Dorsolateral prefrontal cortex (tissue), 120 donors: ENCODE measurements at regions of chr1 and their contacts with region 1.

Region 1: DNA sequence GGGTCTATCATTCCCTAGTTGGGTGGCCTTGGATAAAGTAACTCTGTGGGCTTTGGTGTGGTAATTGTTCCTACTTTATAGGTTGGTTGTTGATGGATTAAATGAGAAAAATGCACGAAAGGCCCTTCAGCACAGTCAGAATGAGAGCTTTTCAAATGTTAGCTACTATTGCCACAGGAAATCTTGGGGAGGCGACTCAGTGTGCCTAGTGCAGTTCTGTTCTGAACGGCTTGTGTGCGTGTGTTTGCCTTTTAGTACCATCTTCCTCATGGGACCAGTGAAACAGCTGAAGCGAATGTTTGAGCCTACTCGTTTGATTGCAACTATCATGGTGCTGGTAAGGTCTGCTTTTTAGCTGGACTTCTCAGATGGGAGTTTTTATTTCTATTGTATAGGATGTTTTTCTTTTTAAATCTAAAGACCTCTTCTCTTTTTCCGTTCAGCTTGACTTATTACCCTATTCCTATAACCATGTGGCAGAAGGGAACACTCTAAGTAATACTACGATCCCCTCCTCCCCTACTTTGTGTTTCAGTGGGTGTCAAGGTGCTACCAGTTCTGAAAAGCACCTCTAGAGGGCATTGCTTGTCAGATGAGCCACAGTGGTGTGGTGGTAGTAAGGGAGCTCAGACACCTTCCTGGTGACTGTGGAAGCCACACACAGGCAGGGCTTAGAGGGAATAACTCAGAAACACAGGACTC is 9.2 kb downstream of the SFT2D2 start:
- DNase-seq: no peak
- H3K4me3 ChIP-seq: no peak overlapping the region
- H3K27ac ChIP-seq: peak overlapping the region in 37 of 59 donors; percentile 3 to 92 (median 83)
- H3K27me3 ChIP-seq: no peaks in the 10 kb centered on the region
- CTCF ChIP-seq: peak in 54 of 56 donors; percentile 25 to 72 (median 56)

Region 2: GRCh38 chr1:168321945-168322344 is 86.9 kb after region 1 on chr1:
- intact Hi-C with region 1: loop called (anchors 5 kb)
- DNase-seq: no peak
- H3K4me3 ChIP-seq: no peak overlapping the region
- H3K27ac ChIP-seq: no peak overlapping the region
- H3K27me3 ChIP-seq: no peaks in the 10 kb centered on the region
- CTCF ChIP-seq: peak in 54 of 56 donors; percentile 13 to 70 (median 46)